Ovary (tissue), 10 donors: ENCODE measurements at regions of chr18 and their contacts with region 1.

Region 1: GRCh38 chr18:23828426-23828825 is 139.2 kb downstream of the LAMA3 start:
- DNase-seq: no peak
- H3K4me3 ChIP-seq: no peak overlapping the region
- H3K27ac ChIP-seq: no peak overlapping the region
- H3K4me1 ChIP-seq: peaks cover 9% of the 10 kb centered on the region
- H3K27me3 ChIP-seq: no peaks in the 10 kb centered on the region
- CTCF ChIP-seq: no peak
- EP300 ChIP-seq: no peak
- POLR2A ChIP-seq: no peak

Region 2: GRCh38 chr18:23883277-23883790 is 54.9 kb after region 1 on chr18:
- intact Hi-C with region 1: loop called in 1 of 4 experiments (anchors 2 kb)
- DNase-seq: no peak
- H3K4me3 ChIP-seq: no peak overlapping the region
- H3K27ac ChIP-seq: peak overlapping the region in 1 of 2 donors; percentile 36
- H3K4me1 ChIP-seq: peaks cover 6% of the 10 kb centered on the region
- H3K27me3 ChIP-seq: no peaks in the 10 kb centered on the region
- CTCF ChIP-seq: no peak
- EP300 ChIP-seq: no peak
- POLR2A ChIP-seq: no peak

Region 3: DNA sequence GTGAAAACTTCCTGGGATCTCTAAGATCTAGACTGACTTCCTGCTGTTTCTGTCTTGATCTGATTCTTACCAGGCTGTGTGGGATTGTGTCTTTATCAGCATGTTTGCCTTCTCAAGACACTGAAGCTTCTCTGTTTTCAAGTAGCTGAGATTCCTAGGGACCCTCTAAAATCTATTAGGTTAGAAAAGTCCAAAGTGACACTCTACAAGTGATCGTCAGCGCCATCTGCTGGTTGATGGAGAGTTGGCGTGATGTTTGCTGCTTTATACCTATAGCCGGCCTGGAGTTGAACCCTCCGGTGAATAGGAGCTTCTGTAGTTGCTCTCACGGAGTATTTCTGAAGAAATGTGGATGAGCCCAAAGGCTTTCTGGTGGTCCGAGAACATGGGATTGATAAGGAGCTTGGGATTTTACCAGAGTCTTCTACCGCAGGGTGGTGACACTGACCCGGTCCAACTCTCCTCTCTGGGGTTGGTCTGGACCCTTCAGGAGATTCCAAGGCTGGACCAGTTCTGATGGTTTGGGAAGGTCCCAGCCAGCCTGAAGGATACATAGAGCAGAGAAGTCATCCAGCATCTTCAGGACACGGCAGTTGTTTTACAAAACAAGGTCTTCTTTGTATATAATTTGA is 90.1 kb after region 1 on chr18:
- intact Hi-C with region 1: loop called in 1 of 4 experiments (anchors 10 kb)
- DNase-seq: peak; percentile 69 to 84 (median 74)
- H3K4me3 ChIP-seq: no peak overlapping the region
- H3K27ac ChIP-seq: no peak overlapping the region
- H3K4me1 ChIP-seq: no peaks in the 10 kb centered on the region
- H3K27me3 ChIP-seq: no peaks in the 10 kb centered on the region
- CTCF ChIP-seq: peak; percentile 48 to 73 (median 60)
- EP300 ChIP-seq: no peak
- POLR2A ChIP-seq: no peak

Region 4: GRCh38 chr18:24118750-24119577 is 290.5 kb after region 1 on chr18:
- intact Hi-C with region 1: loop called in 1 of 4 experiments (anchors 10 kb)
- DNase-seq: peak; percentile 51 to 79 (median 76)
- H3K4me3 ChIP-seq: no peak overlapping the region
- H3K27ac ChIP-seq: no peak overlapping the region
- H3K4me1 ChIP-seq: no peaks in the 10 kb centered on the region
- H3K27me3 ChIP-seq: no peaks in the 10 kb centered on the region
- CTCF ChIP-seq: peak; percentile 85 to 90 (median 87)
- EP300 ChIP-seq: no peak
- POLR2A ChIP-seq: no peak